ENCODE measurements at regions of chr14 and their contacts with region 1.

Region 1: GRCh38 chr14:69766984-69767368 is at the start of gene SRSF5:
- DNase-seq: peak; percentile 92
- ATAC-seq: peak; percentile 78
- H3K4me3 Mint-ChIP-seq: peak within 1 kb of the TSS; percentile 98
- H3K27ac Mint-ChIP-seq: peak within 1 kb of the TSS; percentile 100
- H3K4me1 Mint-ChIP-seq: peaks cover 51% of the 10 kb centered on the region
- H3K27me3 Mint-ChIP-seq: no peaks in the 10 kb centered on the region
- CTCF ChIP-seq: no peak
- total RNA-seq, gene SRSF5: 394 and 422 TPM in 2 replicates

Region 2: GRCh38 chr14:69129264-69129880 is 637.6 kb before region 1 on chr14:
- CTCF ChIA-PET with region 1: no interaction called
- POLR2A ChIA-PET with region 1: no interaction called
- intact Hi-C with region 1: no loop called
- DNase-seq: peak; percentile 24
- ATAC-seq: peak; percentile 76
- H3K4me3 Mint-ChIP-seq: no peak overlapping the region
- H3K27ac Mint-ChIP-seq: peak overlapping the region; percentile 54
- H3K4me1 Mint-ChIP-seq: peaks cover 35% of the 10 kb centered on the region
- H3K27me3 Mint-ChIP-seq: no peaks in the 10 kb centered on the region
- CTCF ChIP-seq: peak; percentile 92

Region 3: DNA sequence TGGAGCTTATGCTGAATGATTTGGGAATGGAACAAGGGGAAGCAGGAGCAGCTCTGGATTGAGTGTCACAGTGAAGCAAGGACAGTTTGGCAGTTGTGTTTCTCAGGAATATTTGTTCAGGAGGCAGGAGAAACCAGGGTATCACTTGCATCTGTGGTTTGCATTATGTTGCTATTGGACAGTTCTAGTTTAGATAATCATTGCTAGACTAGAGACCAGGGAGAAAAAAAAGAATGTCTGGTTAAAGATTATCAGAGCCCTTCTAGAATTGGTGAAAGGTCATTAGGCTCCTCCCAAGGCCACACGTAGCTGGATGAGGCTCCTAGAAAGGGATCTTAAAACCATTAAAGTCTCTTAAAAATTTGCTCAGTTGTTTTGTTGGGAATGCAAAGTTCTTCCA is 17.0 kb before region 1 on chr14:
- CTCF ChIA-PET with region 1: no interaction called
- POLR2A ChIA-PET with region 1: interaction called, 14 read pairs
- intact Hi-C with region 1: no loop called
- DNase-seq: no peak
- ATAC-seq: no peak
- H3K4me3 Mint-ChIP-seq: no peak overlapping the region
- H3K27ac Mint-ChIP-seq: no peak overlapping the region
- H3K4me1 Mint-ChIP-seq: peaks cover 8% of the 10 kb centered on the region
- H3K27me3 Mint-ChIP-seq: no peaks in the 10 kb centered on the region
- CTCF ChIP-seq: no peak

Region 4: DNA sequence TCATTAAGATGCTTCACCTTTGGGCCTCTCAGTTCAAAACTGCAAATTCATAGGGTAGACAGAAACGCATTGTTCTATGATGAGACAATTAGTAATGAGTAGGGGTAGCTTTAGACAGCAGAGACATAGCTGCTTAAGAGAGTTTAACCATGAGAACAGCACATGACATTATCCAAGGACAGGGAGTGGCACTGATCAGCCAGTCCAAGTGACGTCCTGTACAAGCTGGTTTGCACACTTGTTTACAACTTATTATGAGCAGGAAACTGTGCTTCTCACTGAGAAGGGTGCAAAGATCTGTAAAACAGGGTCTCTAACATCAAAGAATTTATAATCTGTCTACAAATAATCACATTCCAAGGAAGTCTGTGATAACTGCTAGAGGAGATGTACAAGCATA is 11.2 kb before region 1 on chr14:
- CTCF ChIA-PET with region 1: no interaction called
- POLR2A ChIA-PET with region 1: interaction called, 14 read pairs
- intact Hi-C with region 1: no loop called
- DNase-seq: no peak
- ATAC-seq: no peak
- H3K4me3 Mint-ChIP-seq: no peak overlapping the region
- H3K27ac Mint-ChIP-seq: no peak overlapping the region
- H3K4me1 Mint-ChIP-seq: peaks cover 8% of the 10 kb centered on the region
- H3K27me3 Mint-ChIP-seq: no peaks in the 10 kb centered on the region
- CTCF ChIP-seq: no peak

Region 5: DNA sequence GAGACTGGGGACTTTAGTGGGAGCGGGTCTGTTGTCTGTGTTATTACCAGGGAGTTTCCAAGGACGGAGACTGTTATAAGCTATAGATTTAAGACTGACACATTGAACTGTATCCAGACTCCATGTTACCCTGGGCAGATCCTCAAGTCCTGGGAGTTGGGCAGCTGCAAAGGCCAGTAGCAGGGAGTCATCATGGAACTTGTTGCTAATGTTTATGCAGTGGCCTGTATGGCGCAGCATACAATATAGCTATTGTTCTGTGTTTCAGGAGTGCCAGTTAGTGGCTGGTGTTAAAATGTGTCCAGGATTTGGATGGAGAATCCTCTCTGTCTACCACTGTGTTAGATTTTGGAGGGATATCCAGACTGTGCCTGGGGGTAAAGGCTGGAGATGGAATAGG is 143.9 kb after region 1 on chr14:
- CTCF ChIA-PET with region 1: no interaction called
- POLR2A ChIA-PET with region 1: no interaction called
- intact Hi-C with region 1: no loop called
- DNase-seq: no peak
- ATAC-seq: no peak
- H3K4me3 Mint-ChIP-seq: no peak overlapping the region
- H3K27ac Mint-ChIP-seq: no peak overlapping the region
- H3K4me1 Mint-ChIP-seq: no peaks in the 10 kb centered on the region
- H3K27me3 Mint-ChIP-seq: peaks cover 10% of the 10 kb centered on the region
- CTCF ChIP-seq: no peak

Region 6: DNA sequence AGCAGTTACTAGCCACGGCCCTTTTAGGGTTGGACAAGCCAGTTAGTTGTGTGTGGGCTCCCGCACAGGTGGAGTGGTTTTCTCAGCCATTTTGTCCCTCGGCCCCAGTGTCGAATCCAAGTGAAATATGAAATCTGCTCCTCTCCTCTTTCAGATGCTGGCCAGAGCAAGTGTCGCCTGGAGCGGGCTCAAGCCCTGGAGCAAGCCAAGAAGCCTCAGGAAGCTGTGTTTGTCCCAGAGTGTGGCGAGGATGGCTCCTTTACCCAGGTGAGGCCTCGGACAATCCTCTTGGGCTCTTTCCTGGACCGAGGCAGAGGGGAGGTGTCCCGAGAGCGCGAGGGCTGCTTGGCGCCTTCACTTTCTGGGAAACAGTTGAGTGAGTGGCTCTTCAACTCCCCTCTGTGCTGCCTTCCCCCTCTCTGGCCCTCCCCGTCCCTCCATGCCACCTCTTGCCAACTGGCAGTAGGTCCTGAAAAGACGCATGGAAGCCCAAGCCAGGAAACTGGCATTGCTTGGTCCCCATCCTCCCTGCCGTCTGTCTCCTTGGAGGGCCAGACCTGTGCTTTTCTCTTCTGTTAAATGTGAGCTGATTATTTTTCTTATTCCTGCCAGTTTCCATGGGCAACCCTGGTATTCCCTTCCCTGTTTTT is 186.4 kb after region 1 on chr14:
- CTCF ChIA-PET with region 1: no interaction called
- POLR2A ChIA-PET with region 1: no interaction called
- intact Hi-C with region 1: no loop called
- DNase-seq: no peak
- ATAC-seq: no peak
- H3K4me3 Mint-ChIP-seq: no peak overlapping the region
- H3K27ac Mint-ChIP-seq: no peak overlapping the region
- H3K4me1 Mint-ChIP-seq: no peaks in the 10 kb centered on the region
- H3K27me3 Mint-ChIP-seq: peaks cover 35% of the 10 kb centered on the region
- CTCF ChIP-seq: no peak

Measured in activated B cell treated with CpG ODN at 0.5 μM for 24 hours (primary cell).